ENCODE measurements at regions of chr1 and their contacts with region 1.

Region 1: DNA sequence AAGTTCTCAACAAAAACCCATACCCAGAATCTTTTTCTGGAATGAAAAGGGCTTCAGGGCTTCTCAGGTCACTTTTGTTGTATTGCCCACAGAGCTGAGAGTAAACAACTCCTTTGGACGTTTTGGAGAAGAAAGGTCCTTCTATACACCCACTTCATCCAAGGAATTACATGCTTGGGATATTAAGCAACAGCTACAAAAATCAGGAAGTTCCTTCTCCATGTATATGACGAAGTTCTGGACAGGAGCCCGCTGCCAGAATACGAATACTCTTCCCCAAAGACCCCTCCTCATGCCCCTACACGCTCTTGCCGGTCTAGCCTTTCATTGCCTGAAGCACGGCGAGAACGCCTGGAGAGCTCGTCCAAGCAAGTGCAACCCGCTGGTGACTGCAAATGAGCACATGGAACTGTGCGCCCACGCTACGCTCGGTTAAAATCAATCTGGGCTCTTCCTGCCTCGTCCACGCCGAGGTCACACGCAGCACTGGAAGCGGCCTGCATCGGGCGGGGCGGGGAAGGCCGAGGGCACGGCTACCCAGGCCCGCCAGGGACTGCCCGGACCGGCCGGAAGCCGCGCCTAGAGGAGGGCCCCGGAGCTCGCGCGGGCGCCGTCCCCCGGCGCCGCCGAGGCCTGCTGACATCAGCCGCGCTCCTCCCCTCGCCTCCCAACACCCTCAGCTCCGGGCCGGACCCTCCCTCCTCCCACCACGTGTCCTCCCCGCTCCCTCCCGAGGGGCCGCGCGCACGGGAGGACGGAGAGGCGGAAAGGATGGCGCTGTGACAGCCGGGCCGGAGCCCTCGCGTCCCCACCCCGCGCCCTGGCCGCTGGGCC is at the start of gene POGK:
- H3K4me3 Mint-ChIP-seq: peak within 1 kb of the TSS; percentile 86
- H3K27ac Mint-ChIP-seq: peak within 1 kb of the TSS; percentile 98
- H3K4me1 Mint-ChIP-seq: peaks cover 70% of the 10 kb centered on the region
- H3K27me3 Mint-ChIP-seq: peaks cover 2% of the 10 kb centered on the region

Region 2: GRCh38 chr1:166489670-166490436 is 349.1 kb before region 1 on chr1:
- intact Hi-C with region 1: loop called (anchors 5 kb)
- H3K4me3 Mint-ChIP-seq: no peak overlapping the region
- H3K27ac Mint-ChIP-seq: no peak overlapping the region
- H3K4me1 Mint-ChIP-seq: peaks cover 6% of the 10 kb centered on the region
- H3K27me3 Mint-ChIP-seq: no peaks in the 10 kb centered on the region

Region 3: DNA sequence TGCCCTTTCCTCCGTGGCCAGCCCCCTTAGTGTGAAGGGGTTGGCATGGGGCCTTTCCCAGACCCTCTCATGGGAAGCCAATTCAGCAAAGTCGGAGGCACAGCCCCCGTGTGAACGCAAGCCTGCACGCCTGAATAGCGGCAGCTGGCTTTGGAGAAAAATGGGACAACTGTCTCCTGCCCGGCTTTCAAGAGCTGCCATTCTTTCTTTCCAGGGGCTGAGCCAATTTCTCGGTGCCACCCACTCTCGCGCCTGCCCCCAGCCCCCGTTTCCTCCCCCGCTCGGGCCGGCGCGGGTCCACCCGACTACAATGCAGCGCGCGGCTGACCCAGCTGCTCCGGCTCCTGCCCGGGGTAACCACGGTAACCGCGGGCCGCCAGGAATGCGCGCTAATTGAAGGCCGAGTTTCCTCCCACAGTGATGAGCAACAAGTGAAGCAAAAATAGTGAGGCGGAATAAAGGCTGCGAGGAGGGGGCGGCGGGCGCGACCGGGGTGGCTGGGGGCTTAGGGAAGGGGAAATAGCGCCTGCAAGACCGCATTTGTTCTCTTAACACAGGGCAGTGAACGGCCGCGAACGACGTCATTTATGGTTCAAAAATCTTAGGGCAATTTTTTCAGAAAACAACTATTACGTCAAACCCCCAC is 108.5 kb after region 1 on chr1:
- intact Hi-C with region 1: no loop called
- H3K4me3 Mint-ChIP-seq: peak overlapping the region; percentile 53
- H3K27ac Mint-ChIP-seq: peak overlapping the region; percentile 25
- H3K4me1 Mint-ChIP-seq: peaks cover 18% of the 10 kb centered on the region
- H3K27me3 Mint-ChIP-seq: peaks cover 26% of the 10 kb centered on the region

Region 4: GRCh38 chr1:167220537-167221125 is 381.6 kb after region 1 on chr1 and contains the start of gene POU2F1:
- intact Hi-C with region 1: loop called (anchors 5 kb)
- H3K4me3 Mint-ChIP-seq: peak within 1 kb of the TSS; percentile 83
- H3K27ac Mint-ChIP-seq: peak within 1 kb of the TSS; percentile 94
- H3K4me1 Mint-ChIP-seq: peaks cover 16% of the 10 kb centered on the region
- H3K27me3 Mint-ChIP-seq: no peaks in the 10 kb centered on the region

Measured in dendritic cell treated with granulocyte-macrophage colony-stimulating factor and Interleukin-4, amounts not matched to agents 40 ng/mL and 50 ng/mL, for 4 days (primary cell).